ENCODE measurements at regions of chr13 and their contacts with region 1.

Region 1: GRCh38 chr13:24254146-24254841 is 55.1 kb upstream of the C1QTNF9 start:
- DNase-seq: peak; percentile 91 to 98 (median 93)
- H3K4me3 ChIP-seq: peak overlapping the region in 4 of 7 experiments; percentile 9 to 46 (median 14)
- H3K27ac ChIP-seq: peak overlapping the region; percentile 12 to 73
- H3K4me1 ChIP-seq: peaks cover 15 to 41% (median 34%) of the 10 kb centered on the region in 4 experiments
- H3K27me3 ChIP-seq: no peaks in the 10 kb centered on the region

Region 2: DNA sequence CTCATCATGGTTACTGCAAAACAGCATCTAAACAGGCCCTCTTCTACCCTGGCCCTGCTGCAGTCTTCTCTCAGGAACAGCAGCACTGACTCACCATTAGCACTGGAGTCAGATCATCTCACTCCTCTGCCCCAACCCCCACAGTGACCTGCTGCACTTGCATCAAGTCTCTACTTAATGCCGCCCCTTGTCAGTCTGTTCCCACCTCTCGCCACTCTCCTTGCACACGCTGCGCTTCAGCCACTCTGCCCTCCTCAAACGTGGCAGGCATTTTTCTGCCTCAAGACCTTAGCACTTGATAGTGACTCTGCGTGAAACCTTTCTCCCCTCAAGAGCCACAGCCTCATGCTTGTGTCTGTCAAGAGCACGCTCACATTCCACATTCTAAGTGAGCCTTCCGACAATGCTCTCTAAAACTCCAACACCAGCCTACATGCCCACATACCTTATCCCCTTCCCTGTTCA is 387.2 kb before region 1 on chr13:
- CTCF ChIA-PET with region 1: no interaction called
- POLR2A ChIA-PET with region 1: no interaction called
- DNase-seq: no peak
- H3K4me3 ChIP-seq: no peak overlapping the region
- H3K27ac ChIP-seq: no peak overlapping the region
- H3K4me1 ChIP-seq: peaks cover 0 to 11% (median 2%) of the 10 kb centered on the region in 4 experiments
- H3K27me3 ChIP-seq: no peaks in the 10 kb centered on the region

Region 3: GRCh38 chr13:24063281-24063877 is 190.9 kb before region 1 on chr13:
- CTCF ChIA-PET with region 1: no interaction called
- POLR2A ChIA-PET with region 1: no interaction called
- DNase-seq: peak in 2 of 3 donors; percentile 33 to 42
- H3K4me3 ChIP-seq: peak overlapping the region in 1 of 7 experiments; percentile 0
- H3K27ac ChIP-seq: no peak overlapping the region
- H3K4me1 ChIP-seq: peaks cover 0 to 15% (median 11%) of the 10 kb centered on the region in 4 experiments
- H3K27me3 ChIP-seq: no peaks in the 10 kb centered on the region

Region 4: GRCh38 chr13:24228852-24229458 is 25.3 kb before region 1 on chr13:
- CTCF ChIA-PET with region 1: interaction called, 12 read pairs
- POLR2A ChIA-PET with region 1: no interaction called
- DNase-seq: peak; percentile 76 to 83 (median 80)
- H3K4me3 ChIP-seq: no peak overlapping the region
- H3K27ac ChIP-seq: no peak overlapping the region
- H3K4me1 ChIP-seq: peaks cover 0 to 16% (median 1%) of the 10 kb centered on the region in 4 experiments
- H3K27me3 ChIP-seq: no peaks in the 10 kb centered on the region

Region 5: DNA sequence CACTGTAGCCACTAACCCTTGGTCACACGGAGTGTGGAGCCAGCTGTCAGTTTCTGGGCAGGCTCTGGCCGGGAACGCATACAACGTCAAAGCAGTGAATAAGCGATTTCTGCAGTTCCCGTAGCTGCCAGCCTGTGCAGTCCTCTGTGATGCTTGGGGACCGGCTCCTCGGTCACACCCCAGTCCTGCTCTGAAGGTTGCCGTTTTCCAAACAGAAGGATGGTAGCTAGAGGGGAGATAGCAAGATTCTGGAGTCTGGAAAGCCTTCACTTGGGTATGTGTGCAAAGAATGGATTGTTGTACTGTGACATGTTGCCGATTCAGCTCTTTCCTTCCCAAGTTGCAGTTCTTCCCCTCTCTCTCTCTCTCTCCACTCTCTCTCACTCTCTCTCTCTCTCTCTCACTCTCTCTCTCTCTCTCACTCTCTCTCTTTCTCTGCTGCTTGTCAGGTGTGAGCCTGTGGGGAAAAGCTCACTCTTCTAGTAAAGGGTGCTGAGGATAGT is 16.4 kb after region 1 on chr13:
- CTCF ChIA-PET with region 1: interaction called, 74 read pairs
- POLR2A ChIA-PET with region 1: interaction called, 18 read pairs
- DNase-seq: peak; percentile 86 to 93 (median 91)
- H3K4me3 ChIP-seq: peak overlapping the region in 6 of 7 experiments; percentile 70 to 93 (median 74)
- H3K27ac ChIP-seq: peak overlapping the region; percentile 81 to 93
- H3K4me1 ChIP-seq: peaks cover 26 to 73% (median 58%) of the 10 kb centered on the region in 4 experiments
- H3K27me3 ChIP-seq: no peaks in the 10 kb centered on the region

Measured in common myeloid progenitor, CD34-positive (primary cell).